Right ventricle myocardium inferior (tissue), 1 donor: ENCODE measurements at regions of chr6 and their contacts with region 1.

Region 1: DNA sequence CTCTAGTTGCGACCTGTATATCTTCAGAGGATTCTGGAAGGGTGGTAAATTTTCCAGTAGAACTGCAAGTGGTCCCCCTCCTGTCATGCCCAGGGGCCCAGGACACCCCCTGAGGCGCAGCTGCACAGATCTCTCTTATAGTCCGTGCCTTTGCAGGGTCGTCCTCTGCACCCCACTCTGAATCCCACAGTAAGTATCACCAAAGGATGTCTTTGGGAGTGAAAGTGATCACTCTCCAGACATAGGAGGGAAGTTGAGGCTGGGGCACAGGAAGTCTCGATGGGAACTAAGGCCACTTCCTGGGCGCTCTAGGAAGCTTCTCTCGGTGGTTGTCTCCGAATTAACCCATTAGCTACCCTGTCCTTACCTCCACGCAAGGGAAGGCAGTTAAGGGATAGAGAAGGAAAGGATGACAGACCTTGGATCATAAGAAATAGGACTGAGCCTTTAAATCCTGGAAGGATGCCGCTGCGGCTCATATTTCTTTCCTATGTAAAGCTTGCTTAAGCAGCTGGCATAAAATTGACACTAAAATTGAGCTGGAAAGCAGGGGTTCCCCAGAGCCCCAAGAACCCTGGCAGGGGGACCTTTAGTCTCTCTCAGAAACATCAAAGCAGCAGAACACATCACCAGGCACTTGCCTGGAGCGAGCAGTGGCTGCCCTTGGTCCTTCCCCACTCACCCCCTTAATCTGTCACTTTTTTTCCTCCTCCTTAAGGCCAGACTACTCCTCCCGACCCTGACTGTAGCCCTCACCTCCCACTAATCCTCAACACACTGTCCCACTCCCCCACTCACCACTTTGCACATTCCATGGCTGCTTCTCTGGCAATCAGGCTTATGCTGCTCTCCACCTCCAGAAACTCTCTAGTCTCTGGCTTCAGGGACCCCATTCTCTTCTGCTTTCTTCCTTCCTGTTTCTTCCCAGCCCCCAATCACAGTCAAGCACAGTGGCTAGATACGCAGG is at the start of gene ZKSCAN4:
- DNase-seq: peak; percentile 69
- ATAC-seq: peak; percentile 98
- total RNA-seq, gene ZKSCAN4: 2.5 TPM

Region 2: DNA sequence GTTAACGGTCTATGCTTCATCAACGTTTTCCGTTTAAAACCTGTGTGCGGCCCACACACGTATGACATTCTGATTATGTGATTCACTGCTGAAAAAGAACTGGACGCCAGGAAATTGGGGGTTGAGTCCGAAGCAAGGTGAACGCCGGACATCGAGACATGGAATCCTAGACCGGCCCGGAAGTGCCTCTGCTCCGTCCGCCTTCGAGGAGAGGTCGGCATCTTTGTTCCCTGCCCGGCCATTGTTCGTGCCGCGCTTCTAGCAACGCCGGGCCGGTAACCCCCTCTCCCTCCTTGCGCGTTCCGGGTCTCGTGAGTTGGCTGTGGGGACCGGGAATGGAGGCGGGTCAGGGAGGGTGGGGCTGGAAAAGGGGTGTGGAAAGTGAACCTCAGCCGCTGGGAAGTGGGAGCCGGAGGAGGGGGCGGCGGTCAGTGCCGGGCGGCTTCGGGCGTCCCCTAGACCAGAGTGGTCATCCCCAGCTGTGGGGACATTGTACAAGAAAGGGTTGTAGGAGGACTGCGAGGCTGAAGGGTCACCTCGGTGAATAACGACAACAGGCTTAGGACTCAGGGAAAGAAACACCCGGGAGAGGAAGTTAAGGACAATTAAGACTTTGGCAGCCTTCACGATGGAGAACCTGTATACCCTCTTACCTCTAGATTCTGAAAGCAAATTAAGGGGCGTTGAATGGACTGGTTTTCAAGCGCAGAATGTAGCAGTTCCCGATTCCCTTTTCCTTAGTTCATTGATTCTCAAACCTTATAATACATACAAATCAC is 27.0 kb before region 1 on chr6 and contains the start of gene ZSCAN9:
- intact Hi-C with region 1: loop called (anchors 2 kb)
- DNase-seq: peak; percentile 91
- ATAC-seq: peak; percentile 97
- total RNA-seq, gene ZSCAN9: 9.4 TPM